ENCODE measurements at regions of chr6 and their contacts with region 1.

Region 1: GRCh38 chr6:70310063-70310694 is 7.3 kb upstream of the COL9A1 start:
- ATAC-seq: peak in 3 of 8 experiments; percentile 35 to 42 (median 40)
- H3K4me3 ChIP-seq: no peak overlapping the region
- H3K27ac ChIP-seq: no peak overlapping the region
- H3K4me1 ChIP-seq: peaks cover 0 to 8% of the 10 kb centered on the region in 2 donors

Region 2: DNA sequence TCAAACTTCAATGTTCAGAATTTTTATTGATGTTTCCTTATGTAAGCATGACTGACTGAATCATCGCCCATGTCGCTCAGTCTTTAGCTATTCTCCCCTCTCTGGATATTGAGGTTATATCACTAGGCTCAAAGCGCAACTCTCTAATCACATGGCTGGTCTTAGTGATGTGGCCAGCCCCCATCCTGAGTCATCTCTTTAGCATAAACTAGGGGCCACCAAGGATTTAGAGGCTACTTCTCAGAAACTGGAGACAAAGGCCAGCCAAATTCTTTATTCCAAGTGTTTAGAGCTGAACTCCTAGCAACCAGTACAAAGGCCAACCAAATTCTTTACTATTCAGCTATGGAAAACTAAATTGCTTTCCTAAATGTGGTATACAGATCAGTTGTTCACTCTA is 164.6 kb after region 1 on chr6:
- in situ Hi-C with region 1: loop called in 1 of 9 experiments (anchors 25 kb)
- ATAC-seq: peak in 6 of 8 experiments; percentile 49 to 99 (median 98)
- H3K4me3 ChIP-seq: no peak overlapping the region
- H3K27ac ChIP-seq: peak overlapping the region; percentile 66 to 77
- H3K4me1 ChIP-seq: peaks cover 9 to 13% of the 10 kb centered on the region in 2 donors

Measured in motor neuron (in vitro differentiated cells).